Ovary (tissue), 10 donors: ENCODE measurements at regions of chr1 and their contacts with region 1.

Region 1: GRCh38 chr1:27192039-27192529 is 37.2 kb upstream of the SLC9A1 start:
- DNase-seq: no peak
- H3K4me3 ChIP-seq: no peak overlapping the region
- H3K27ac ChIP-seq: no peak overlapping the region
- H3K4me1 ChIP-seq: no peaks in the 10 kb centered on the region
- H3K27me3 ChIP-seq: no peaks in the 10 kb centered on the region
- CTCF ChIP-seq: no peak
- EP300 ChIP-seq: no peak
- POLR2A ChIP-seq: no peak

Region 2: GRCh38 chr1:26582836-26583460 is 609.1 kb before region 1 on chr1:
- intact Hi-C with region 1: no loop called
- DNase-seq: no peak
- H3K4me3 ChIP-seq: no peak overlapping the region
- H3K27ac ChIP-seq: no peak overlapping the region
- H3K4me1 ChIP-seq: no peaks in the 10 kb centered on the region
- H3K27me3 ChIP-seq: no peaks in the 10 kb centered on the region
- CTCF ChIP-seq: no peak
- EP300 ChIP-seq: no peak
- POLR2A ChIP-seq: no peak

Region 3: DNA sequence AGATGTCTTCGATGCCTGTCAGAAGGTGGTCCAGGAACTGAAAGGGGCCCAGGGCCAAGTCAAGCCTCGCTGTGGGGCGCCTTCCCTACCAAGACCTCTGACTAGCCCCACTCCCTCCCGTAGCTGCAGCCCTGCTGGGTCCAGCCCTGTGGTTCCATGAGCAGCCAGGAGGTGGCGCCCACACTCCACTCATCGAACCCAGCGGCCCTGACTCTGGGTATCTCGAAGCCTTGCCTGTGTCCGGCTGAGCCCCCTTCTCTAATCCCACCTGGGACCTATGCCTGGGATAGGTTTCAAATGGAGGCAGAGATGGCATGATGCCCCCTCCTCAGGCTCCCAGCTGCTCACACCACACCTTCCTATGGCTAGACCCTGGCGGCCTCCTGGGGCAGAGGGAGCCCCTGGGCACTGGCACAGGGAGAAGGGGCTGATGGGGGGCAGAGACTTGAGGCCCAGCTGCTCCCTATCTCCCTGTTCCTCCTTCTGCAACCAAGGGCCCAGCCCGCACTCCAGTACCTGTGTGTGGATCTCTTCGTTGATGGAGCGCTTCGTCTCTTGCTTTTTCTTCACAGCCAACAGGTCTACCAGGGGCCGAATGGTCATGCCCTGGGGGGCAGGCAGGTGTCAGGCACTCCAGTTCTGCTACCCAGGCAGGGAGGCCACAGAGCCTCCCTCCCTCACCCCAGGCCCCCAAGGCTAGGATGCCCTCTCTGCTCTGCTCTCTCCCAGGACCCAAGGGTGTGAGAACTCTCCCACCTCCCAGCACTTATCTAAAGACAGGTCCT is 89.2 kb before region 1 on chr1:
- intact Hi-C with region 1: loop called in 1 of 4 experiments (anchors 5 kb)
- DNase-seq: peak; percentile 66 to 90 (median 82)
- H3K4me3 ChIP-seq: no peak overlapping the region
- H3K27ac ChIP-seq: no peak overlapping the region
- H3K4me1 ChIP-seq: peaks cover 4% of the 10 kb centered on the region
- H3K27me3 ChIP-seq: no peaks in the 10 kb centered on the region
- CTCF ChIP-seq: peak; percentile 84 to 96 (median 93)
- EP300 ChIP-seq: no peak
- POLR2A ChIP-seq: no peak

Region 4: DNA sequence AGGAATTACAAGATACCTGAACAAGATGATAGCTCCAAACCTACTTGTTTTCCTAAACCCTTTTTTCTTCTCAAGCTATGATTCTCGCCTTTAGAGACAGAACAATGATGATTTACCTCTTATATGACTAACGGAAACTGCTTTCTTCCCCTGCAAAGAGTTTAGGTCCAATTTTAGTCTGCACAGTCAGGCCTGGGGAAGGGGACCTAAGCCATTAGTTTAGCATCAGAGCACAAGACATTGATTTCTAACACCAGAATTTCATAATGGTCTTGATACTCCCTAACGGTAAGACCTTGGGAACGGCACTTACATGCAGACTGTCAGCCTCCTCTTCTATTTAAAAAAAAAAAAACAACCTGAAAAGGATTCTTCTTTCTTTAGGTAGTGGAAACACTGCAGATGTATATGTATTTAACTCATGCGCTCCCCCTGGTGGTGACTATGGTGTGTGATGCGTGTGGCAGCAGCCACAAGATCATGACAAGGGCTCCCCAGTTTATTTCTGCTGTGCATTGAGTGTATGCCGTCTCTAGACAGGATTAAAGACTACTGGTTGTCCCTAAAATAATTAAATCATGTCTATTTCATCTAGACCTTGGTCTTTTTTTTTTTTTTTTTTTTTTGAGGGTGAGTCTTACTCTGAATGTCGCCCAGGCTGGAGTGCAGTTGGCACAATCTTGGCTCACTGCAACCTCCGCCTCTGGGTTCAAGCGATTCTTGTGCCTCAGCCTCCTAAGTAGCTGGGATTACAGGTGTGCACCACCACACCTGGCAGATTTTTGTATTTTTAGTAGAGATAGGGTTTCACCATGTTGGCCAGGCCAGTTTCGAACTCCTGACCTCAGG is 92.6 kb after region 1 on chr1:
- intact Hi-C with region 1: loop called in 1 of 4 experiments (anchors 5 kb)
- DNase-seq: peak; percentile 77 to 88 (median 84)
- H3K4me3 ChIP-seq: no peak overlapping the region
- H3K27ac ChIP-seq: no peak overlapping the region
- H3K4me1 ChIP-seq: no peaks in the 10 kb centered on the region
- H3K27me3 ChIP-seq: no peaks in the 10 kb centered on the region
- CTCF ChIP-seq: peak; percentile 62 to 71 (median 63)
- EP300 ChIP-seq: no peak
- POLR2A ChIP-seq: no peak

Region 5: GRCh38 chr1:27300341-27301051 is 108.4 kb after region 1 on chr1:
- intact Hi-C with region 1: loop called in 1 of 4 experiments (anchors 10 kb)
- DNase-seq: peak; percentile 88 to 93 (median 89)
- H3K4me3 ChIP-seq: no peak overlapping the region
- H3K27ac ChIP-seq: peak overlapping the region; percentile 13 to 41
- H3K4me1 ChIP-seq: no peaks in the 10 kb centered on the region
- H3K27me3 ChIP-seq: no peaks in the 10 kb centered on the region
- CTCF ChIP-seq: peak; percentile 97 to 99 (median 98)
- EP300 ChIP-seq: no peak
- POLR2A ChIP-seq: peak; percentile 23